ENCODE measurements at regions of chr7 and their contacts with region 1.

Region 1: DNA sequence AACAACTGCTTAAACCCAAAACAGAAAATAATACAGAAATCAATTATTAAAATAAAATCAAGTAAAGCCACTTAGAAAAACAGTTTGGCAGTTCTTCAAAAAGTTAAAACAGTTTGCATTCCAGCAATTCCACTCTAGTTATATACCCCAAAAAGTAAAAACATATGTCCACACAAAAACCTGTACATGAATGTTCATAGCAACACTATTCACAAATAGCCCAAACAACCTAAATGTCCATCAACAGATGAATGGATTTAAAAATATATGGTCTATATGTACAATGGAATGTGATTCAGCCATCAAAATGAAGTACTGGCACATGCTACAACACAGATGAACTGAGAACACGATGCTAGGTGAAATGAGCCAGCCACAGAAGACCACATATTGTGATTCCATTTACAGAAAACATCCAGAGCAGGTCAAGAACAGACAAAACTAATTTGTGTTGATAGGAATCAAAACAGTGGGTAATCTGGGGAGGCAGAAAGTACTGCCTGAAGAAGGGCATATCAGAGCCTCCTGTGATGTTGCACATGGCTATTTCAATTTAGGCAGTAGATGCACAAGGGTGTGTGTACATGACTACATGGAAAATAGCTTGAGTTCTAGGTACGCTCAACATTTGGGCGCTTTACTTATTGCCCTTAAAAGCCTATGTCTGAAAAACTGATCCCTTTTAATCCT is 66.3 kb downstream of the CYTH3 start:
- DNase-seq: no peak
- ATAC-seq: no peak
- H3K4me3 ChIP-seq: no peak overlapping the region
- H3K27ac ChIP-seq: no peak overlapping the region
- H3K4me1 ChIP-seq: peaks cover 4% of the 10 kb centered on the region
- H3K27me3 ChIP-seq: no peaks in the 10 kb centered on the region
- CTCF ChIP-seq: no peak

Region 2: DNA sequence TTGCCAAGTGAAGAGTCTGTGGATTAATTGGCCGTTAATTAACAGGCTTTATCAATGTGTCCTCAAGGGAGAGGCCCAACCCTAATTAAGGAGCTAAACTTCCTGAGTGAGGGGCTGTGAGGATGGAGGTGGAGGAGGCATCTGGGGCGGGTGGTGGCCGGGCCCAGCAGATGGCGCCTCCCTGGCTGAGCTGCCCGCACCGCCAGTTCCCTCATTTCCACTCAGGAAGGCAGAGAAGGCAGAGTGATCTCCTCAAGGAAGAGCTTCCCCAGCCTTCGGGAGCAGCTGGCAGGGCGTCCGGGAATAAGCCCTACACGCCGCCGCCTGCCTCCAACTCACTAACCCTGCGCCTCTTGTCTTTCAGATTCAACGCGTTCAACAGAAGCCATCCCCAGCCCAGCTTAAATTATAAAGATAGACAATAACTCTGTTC is 45.9 kb before region 1 on chr7:
- CTCF ChIA-PET with region 1: no interaction called
- POLR2A ChIA-PET with region 1: no interaction called
- in situ Hi-C with region 1: no loop called
- intact Hi-C with region 1: no loop called
- DNase-seq: no peak
- ATAC-seq: peak; percentile 77; the same call in 1 of the 2 replicates
- H3K4me3 ChIP-seq: no peak overlapping the region
- H3K27ac ChIP-seq: no peak overlapping the region
- H3K4me1 ChIP-seq: no peaks in the 10 kb centered on the region
- H3K27me3 ChIP-seq: no peaks in the 10 kb centered on the region
- CTCF ChIP-seq: no peak; the same call in 1 of the 2 replicates

Region 3: DNA sequence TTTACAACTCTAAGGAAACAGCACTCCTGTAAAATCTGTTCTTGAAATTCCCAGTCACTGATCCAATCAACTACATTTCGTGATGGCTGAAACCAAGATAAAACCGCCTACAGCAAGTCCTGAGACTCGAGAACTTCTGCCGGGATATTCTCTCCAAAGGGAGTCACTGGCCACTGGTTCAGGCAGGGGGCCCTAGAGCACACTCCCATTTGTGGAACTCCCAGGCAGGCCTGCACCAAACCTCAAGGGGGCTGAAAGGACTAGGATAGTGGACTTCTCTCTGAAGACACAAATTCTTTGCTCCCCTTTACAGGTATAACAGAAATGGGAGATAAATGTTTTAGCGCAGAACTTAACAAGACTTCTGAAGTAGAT is 50.0 kb after region 1 on chr7:
- CTCF ChIA-PET with region 1: no interaction called
- POLR2A ChIA-PET with region 1: no interaction called
- in situ Hi-C with region 1: loop called (anchors 10 kb)
- intact Hi-C with region 1: no loop called
- DNase-seq: no peak
- ATAC-seq: peak; percentile 54; the same call in 1 of the 2 replicates
- H3K4me3 ChIP-seq: no peak overlapping the region
- H3K27ac ChIP-seq: no peak overlapping the region
- H3K4me1 ChIP-seq: peaks cover 22% of the 10 kb centered on the region
- H3K27me3 ChIP-seq: no peaks in the 10 kb centered on the region
- CTCF ChIP-seq: no peak; the same call in 1 of the 2 replicates